A549 (cell line): ENCODE measurements at regions of chr16 and their contacts with region 1.

Region 1: GRCh38 chr16:21184834-21185233 is 26.4 kb downstream of the LDAF1 start:
- DNase-seq: no peak
- ATAC-seq: no peak
- H3K4me3 ChIP-seq: no peak overlapping the region
- H3K27ac ChIP-seq: no peak overlapping the region
- H3K4me1 ChIP-seq: peaks cover 10% of the 10 kb centered on the region; the same call in 2 of the 3 replicates
- CTCF ChIP-seq: no peak
- EP300 ChIP-seq: no peak
- POLR2A ChIP-seq: no peak
- RAD21 ChIP-seq: no peak

Region 2: GRCh38 chr16:20971401-20971800 is 213.4 kb before region 1 on chr16:
- CTCF ChIA-PET with region 1: no interaction called
- POLR2A ChIA-PET with region 1: no interaction called
- DNase-seq: no peak
- ATAC-seq: no peak
- H3K4me3 ChIP-seq: no peak overlapping the region
- H3K27ac ChIP-seq: no peak overlapping the region
- H3K4me1 ChIP-seq: no peaks in the 10 kb centered on the region
- CTCF ChIP-seq: no peak
- EP300 ChIP-seq: no peak
- POLR2A ChIP-seq: no peak
- RAD21 ChIP-seq: no peak

Region 3: DNA sequence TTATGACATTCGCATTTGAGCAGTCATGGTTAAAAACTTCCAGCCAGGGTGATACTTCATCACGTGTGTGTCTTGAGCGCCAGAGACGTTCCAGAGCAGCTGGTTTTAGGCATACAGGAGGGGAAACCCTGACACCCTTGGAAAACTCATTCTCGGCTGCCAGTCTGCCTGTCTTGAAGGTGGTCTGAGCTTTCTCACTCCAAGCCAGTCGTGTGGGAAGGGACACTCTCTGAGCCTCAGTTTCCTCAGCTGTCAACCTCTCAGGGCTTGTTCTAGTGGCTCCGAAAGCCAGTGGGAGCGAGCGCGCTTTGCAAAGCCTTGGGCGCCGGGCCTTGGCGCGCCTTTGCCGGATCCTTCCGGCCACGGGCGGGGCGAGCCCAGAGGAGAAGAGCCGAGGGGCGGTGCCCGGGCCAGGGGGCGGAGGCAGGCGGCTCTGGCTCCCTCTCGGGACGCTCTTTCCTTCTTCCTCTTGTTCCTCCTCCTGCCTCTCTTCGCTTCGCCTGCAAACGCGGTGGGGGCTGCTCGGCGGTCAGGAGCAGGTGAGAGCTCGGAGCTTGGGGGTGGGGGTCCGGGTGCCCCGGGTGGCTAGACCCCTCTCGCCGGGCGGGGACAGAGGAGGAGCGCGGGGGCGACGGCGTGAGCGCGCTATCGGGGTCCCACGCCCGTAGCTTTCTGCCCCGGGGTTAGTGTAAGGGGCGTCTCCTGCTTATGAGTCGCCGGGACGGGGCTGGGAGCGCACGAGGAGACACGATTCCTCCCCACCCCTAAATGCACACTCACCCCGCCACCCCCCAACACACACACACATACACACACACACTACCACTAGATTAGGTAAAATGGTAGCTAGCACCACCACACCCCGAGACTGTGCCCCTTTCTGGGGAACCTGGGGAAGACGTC is 26.4 kb before region 1 on chr16 and contains the start of gene LDAF1:
- CTCF ChIA-PET with region 1: interaction called, 23 read pairs
- POLR2A ChIA-PET with region 1: no interaction called
- DNase-seq: peak; percentile 64 to 75
- ATAC-seq: peak; percentile 97 to 99
- H3K4me3 ChIP-seq: peak within 1 kb of the TSS; percentile 83
- H3K27ac ChIP-seq: peak within 1 kb of the TSS; percentile 84 to 95
- H3K4me1 ChIP-seq: peaks cover 25% of the 10 kb centered on the region; the same call in 2 of the 3 replicates
- CTCF ChIP-seq: no peak
- EP300 ChIP-seq: no peak
- POLR2A ChIP-seq: no peak; the same call in 1 of the 2 replicates
- RAD21 ChIP-seq: no peak; a peak in 1 of 5 replicates
- polyA plus RNA-seq, gene LDAF1: 14.4 and 16.2 TPM in 2 replicates

Region 4: GRCh38 chr16:21172650-21173049 is 12.2 kb before region 1 on chr16:
- CTCF ChIA-PET with region 1: interaction called, 37 read pairs
- POLR2A ChIA-PET with region 1: no interaction called
- DNase-seq: no peak
- ATAC-seq: no peak
- H3K4me3 ChIP-seq: no peak overlapping the region
- H3K27ac ChIP-seq: no peak overlapping the region
- H3K4me1 ChIP-seq: peaks cover 5% of the 10 kb centered on the region; the same call in 1 of the 3 replicates
- CTCF ChIP-seq: no peak
- EP300 ChIP-seq: no peak
- POLR2A ChIP-seq: no peak
- RAD21 ChIP-seq: no peak

Region 5: GRCh38 chr16:21226749-21227148 is 41.9 kb after region 1 on chr16:
- CTCF ChIA-PET with region 1: interaction called, 12 read pairs
- POLR2A ChIA-PET with region 1: no interaction called
- DNase-seq: no peak
- ATAC-seq: no peak
- H3K4me3 ChIP-seq: no peak overlapping the region
- H3K27ac ChIP-seq: no peak overlapping the region
- H3K4me1 ChIP-seq: peaks cover 16% of the 10 kb centered on the region
- CTCF ChIP-seq: no peak
- EP300 ChIP-seq: no peak
- POLR2A ChIP-seq: no peak
- RAD21 ChIP-seq: no peak

Region 6: GRCh38 chr16:21263640-21264570 is 79.1 kb after region 1 on chr16:
- CTCF ChIA-PET with region 1: interaction called, 12 read pairs
- POLR2A ChIA-PET with region 1: no interaction called
- DNase-seq: peak; percentile 14 to 30
- ATAC-seq: no peak; a peak in 1 of 6 replicates
- H3K4me3 ChIP-seq: no peak overlapping the region
- H3K27ac ChIP-seq: peak overlapping the region; percentile 4 to 56; a peak in 3 of 6 replicates
- H3K4me1 ChIP-seq: peaks cover 42% of the 10 kb centered on the region
- CTCF ChIP-seq: no peak
- EP300 ChIP-seq: no peak
- POLR2A ChIP-seq: no peak
- RAD21 ChIP-seq: no peak

Region 7: DNA sequence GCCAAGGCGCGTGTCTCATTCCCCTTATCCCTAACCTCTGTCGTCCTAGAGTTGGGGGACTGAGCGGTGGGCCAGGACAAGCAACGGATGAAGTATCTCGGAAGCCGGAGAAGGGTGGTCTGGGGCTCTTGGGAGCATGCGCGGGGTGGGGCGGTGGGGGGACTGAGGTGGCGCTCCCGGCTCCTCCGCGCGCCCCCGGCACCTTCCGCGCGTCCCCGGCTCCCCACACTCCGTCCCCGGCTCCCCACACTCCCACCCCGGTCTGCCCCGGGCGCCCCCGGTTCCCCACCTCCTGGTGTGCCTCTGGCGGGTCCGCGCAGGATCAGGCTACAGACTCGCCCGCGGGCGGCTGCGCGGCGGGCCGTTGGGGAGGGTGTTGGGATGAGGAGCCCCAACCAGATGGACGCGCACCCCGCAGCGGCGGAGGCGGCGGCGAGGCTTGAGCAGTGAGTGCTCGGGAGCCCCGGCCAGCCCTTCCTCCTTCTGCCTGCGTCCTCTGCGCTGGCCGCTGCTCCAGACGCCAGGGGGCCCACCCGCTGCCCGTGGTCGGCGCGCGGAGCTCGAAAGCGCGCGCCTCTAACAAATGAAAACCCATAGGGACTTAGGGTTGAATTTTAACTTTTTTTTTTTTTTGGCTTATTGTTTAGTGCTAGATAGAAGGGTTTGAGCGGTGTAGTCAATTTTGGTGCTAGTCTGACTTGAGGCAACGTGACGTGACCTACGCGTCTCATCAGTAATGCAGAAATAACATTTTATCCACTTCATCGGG is 98.9 kb after region 1 on chr16:
- CTCF ChIA-PET with region 1: interaction called, 160 read pairs
- POLR2A ChIA-PET with region 1: interaction called, 4 read pairs
- DNase-seq: peak; percentile 56 to 65
- ATAC-seq: peak; percentile 100
- H3K4me3 ChIP-seq: peak overlapping the region; percentile 50
- H3K27ac ChIP-seq: peak overlapping the region; percentile 68 to 86; a peak in 5 of 6 replicates
- H3K4me1 ChIP-seq: no peaks in the 10 kb centered on the region
- CTCF ChIP-seq: peak; percentile 47
- EP300 ChIP-seq: no peak
- POLR2A ChIP-seq: no peak
- RAD21 ChIP-seq: peak; percentile 30 to 56; a peak in 4 of 5 replicates